ENCODE measurements at regions of chr6 and their contacts with region 1.

Region 1: GRCh38 chr6:105087571-105088211 is 92.1 kb downstream of the POPDC3 start:
- DNase-seq: no peak
- H3K4me3 ChIP-seq: no peak overlapping the region
- H3K27ac ChIP-seq: no peak overlapping the region
- H3K4me1 ChIP-seq: no peaks in the 10 kb centered on the region
- H3K27me3 ChIP-seq: no peaks in the 10 kb centered on the region
- CTCF ChIP-seq: peak in 2 of 3 experiments; percentile 55 to 74; a peak in 2 of 4 replicates
- EP300 ChIP-seq: no peak
- POLR2A ChIP-seq: no peak
- RAD21 ChIP-seq: peak; percentile 89 to 90

Region 2: GRCh38 chr6:104771258-104771832 is 316.3 kb before region 1 on chr6:
- CTCF ChIA-PET with region 1: no interaction called
- POLR2A ChIA-PET with region 1: no interaction called
- DNase-seq: no peak
- H3K4me3 ChIP-seq: no peak overlapping the region
- H3K27ac ChIP-seq: no peak overlapping the region
- H3K4me1 ChIP-seq: no peaks in the 10 kb centered on the region
- H3K27me3 ChIP-seq: no peaks in the 10 kb centered on the region
- CTCF ChIP-seq: peak in 2 of 3 experiments; percentile 26 to 29; a peak in 2 of 4 replicates
- EP300 ChIP-seq: no peak
- POLR2A ChIP-seq: no peak
- RAD21 ChIP-seq: peak; percentile 48 to 63

Region 3: DNA sequence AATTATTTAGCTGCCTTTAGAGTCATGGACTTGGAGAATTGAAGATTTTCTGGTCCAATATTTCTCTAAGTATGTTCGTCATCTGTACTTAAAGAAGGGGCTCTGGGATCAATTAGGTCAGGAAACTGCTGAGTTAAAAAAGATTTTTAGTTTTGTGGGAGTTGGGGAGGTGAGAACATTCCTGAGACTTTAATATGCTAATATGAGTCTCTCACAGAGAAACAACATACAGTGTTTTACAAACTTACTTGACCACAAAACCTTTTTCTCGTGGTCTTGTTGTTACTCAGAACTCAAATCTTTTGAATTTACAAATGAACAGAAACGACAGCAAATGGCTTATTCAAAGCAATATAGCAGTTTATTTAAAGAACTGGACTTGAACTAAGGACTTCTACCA is 62.9 kb before region 1 on chr6:
- CTCF ChIA-PET with region 1: no interaction called
- POLR2A ChIA-PET with region 1: no interaction called
- DNase-seq: no peak
- H3K4me3 ChIP-seq: peak overlapping the region in 1 of 4 experiments; percentile 45; a peak in 2 of 8 replicates
- H3K27ac ChIP-seq: peak overlapping the region; percentile 6; the same call in 1 of the 2 replicates
- H3K4me1 ChIP-seq: peaks cover 0 to 19% (median 2%) of the 10 kb centered on the region in 4 experiments; a peak in 2 of 7 replicates
- H3K27me3 ChIP-seq: no peaks in the 10 kb centered on the region
- CTCF ChIP-seq: no peak
- EP300 ChIP-seq: no peak
- POLR2A ChIP-seq: no peak
- RAD21 ChIP-seq: no peak

Region 4: GRCh38 chr6:105051896-105052471 is 35.7 kb before region 1 on chr6:
- CTCF ChIA-PET with region 1: no interaction called
- POLR2A ChIA-PET with region 1: no interaction called
- DNase-seq: no peak
- H3K4me3 ChIP-seq: no peak overlapping the region
- H3K27ac ChIP-seq: no peak overlapping the region
- H3K4me1 ChIP-seq: peaks cover 0 to 5% (median 2%) of the 10 kb centered on the region in 4 experiments; a peak in 3 of 7 replicates
- H3K27me3 ChIP-seq: no peaks in the 10 kb centered on the region
- CTCF ChIP-seq: no peak
- EP300 ChIP-seq: no peak
- POLR2A ChIP-seq: no peak
- RAD21 ChIP-seq: no peak

Region 5: DNA sequence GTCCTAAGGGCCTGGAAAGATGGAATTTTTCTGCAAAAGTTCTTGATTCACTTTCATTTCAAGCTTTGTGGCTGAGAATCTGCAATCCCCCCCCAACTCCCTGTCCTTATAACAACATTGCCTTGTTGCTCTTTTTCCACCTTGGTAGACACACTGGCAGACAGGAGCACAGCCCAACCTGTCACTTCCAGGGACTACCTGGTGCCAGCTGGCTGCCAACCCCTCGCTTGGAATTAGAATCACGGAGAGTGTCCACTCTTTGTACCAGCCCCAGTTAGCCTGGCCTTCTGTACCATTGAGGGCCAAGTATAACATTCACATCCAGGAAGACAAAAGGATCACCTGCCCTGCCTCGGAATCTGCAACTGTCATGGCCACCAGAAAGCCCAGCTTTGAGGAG is 17.4 kb after region 1 on chr6:
- CTCF ChIA-PET with region 1: interaction called, 29 read pairs
- POLR2A ChIA-PET with region 1: no interaction called
- DNase-seq: no peak
- H3K4me3 ChIP-seq: no peak overlapping the region
- H3K27ac ChIP-seq: no peak overlapping the region
- H3K4me1 ChIP-seq: no peaks in the 10 kb centered on the region
- H3K27me3 ChIP-seq: no peaks in the 10 kb centered on the region
- CTCF ChIP-seq: no peak
- EP300 ChIP-seq: no peak
- POLR2A ChIP-seq: no peak
- RAD21 ChIP-seq: no peak

Region 6: DNA sequence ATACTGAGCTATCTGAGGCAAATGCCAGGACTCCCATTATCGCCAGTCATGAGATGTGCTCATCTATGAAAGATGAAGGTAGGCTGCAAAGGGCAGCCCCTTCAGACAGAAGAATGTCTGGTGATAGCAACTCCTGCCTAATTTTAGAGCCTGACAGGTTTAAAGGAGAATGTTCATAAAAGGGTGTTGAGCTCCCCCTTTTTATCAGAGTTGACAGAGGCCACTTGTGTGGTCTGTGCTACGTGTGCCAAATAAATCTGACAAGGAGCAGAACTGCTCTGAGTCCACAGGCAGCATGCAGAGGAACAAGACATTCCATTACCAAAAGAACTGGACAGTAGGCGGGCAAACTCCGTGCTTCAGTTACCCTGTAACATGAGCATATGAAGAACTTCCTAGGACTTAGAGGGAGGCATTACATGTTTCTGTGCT is 213.4 kb after region 1 on chr6:
- CTCF ChIA-PET with region 1: interaction called, 17 read pairs
- POLR2A ChIA-PET with region 1: no interaction called
- DNase-seq: no peak
- H3K4me3 ChIP-seq: no peak overlapping the region
- H3K27ac ChIP-seq: no peak overlapping the region
- H3K4me1 ChIP-seq: peaks cover 2 to 6% (median 3%) of the 10 kb centered on the region in 4 experiments; a peak in 4 of 7 replicates
- H3K27me3 ChIP-seq: no peaks in the 10 kb centered on the region
- CTCF ChIP-seq: no peak
- EP300 ChIP-seq: no peak
- POLR2A ChIP-seq: no peak
- RAD21 ChIP-seq: no peak

Region 7: GRCh38 chr6:105363100-105363754 is 275.5 kb after region 1 on chr6:
- CTCF ChIA-PET with region 1: interaction called, 37 read pairs
- POLR2A ChIA-PET with region 1: no interaction called
- DNase-seq: no peak
- H3K4me3 ChIP-seq: no peak overlapping the region
- H3K27ac ChIP-seq: no peak overlapping the region
- H3K4me1 ChIP-seq: no peaks in the 10 kb centered on the region
- H3K27me3 ChIP-seq: peaks cover 0 to 1% (median 0%) of the 10 kb centered on the region in 4 experiments; a peak in 1 of 7 replicates
- CTCF ChIP-seq: peak in 2 of 3 experiments; percentile 14 to 15; a peak in 2 of 4 replicates
- EP300 ChIP-seq: no peak
- POLR2A ChIP-seq: no peak
- RAD21 ChIP-seq: peak; percentile 46 to 49

Region 8: GRCh38 chr6:105424175-105424783 is 336.6 kb after region 1 on chr6:
- CTCF ChIA-PET with region 1: interaction called, 15 read pairs
- POLR2A ChIA-PET with region 1: no interaction called
- DNase-seq: peak; percentile 64 to 83
- H3K4me3 ChIP-seq: no peak overlapping the region
- H3K27ac ChIP-seq: no peak overlapping the region
- H3K4me1 ChIP-seq: peaks cover 0 to 3% (median 0%) of the 10 kb centered on the region in 4 experiments; a peak in 1 of 7 replicates
- H3K27me3 ChIP-seq: no peaks in the 10 kb centered on the region
- CTCF ChIP-seq: peak in 2 of 3 experiments; percentile 60 to 77; a peak in 3 of 4 replicates
- EP300 ChIP-seq: no peak
- POLR2A ChIP-seq: no peak
- RAD21 ChIP-seq: peak; percentile 45 to 69

Measured in H1 (cell line).